ENCODE measurements at regions of chr1 and their contacts with region 1.

Region 1: GRCh38 chr1:174217787-174218574 is 58.7 kb downstream of the RABGAP1L start:
- DNase-seq: no peak
- ATAC-seq: peak; percentile 51
- H3K4me3 Mint-ChIP-seq: no peak overlapping the region
- H3K27ac Mint-ChIP-seq: no peak overlapping the region
- H3K4me1 Mint-ChIP-seq: peaks cover 12% of the 10 kb centered on the region
- H3K27me3 Mint-ChIP-seq: no peaks in the 10 kb centered on the region

Region 2: GRCh38 chr1:173420330-173420806 is 797.6 kb before region 1 on chr1:
- CTCF ChIA-PET with region 1: interaction called, 3 read pairs
- POLR2A ChIA-PET with region 1: no interaction called
- intact Hi-C with region 1: loop called in 1 of 2 experiments (anchors 1 kb)
- DNase-seq: peak; percentile 69
- ATAC-seq: peak; percentile 91
- H3K4me3 Mint-ChIP-seq: no peak overlapping the region
- H3K27ac Mint-ChIP-seq: no peak overlapping the region
- H3K4me1 Mint-ChIP-seq: peaks cover 3% of the 10 kb centered on the region
- H3K27me3 Mint-ChIP-seq: no peaks in the 10 kb centered on the region

Region 3: DNA sequence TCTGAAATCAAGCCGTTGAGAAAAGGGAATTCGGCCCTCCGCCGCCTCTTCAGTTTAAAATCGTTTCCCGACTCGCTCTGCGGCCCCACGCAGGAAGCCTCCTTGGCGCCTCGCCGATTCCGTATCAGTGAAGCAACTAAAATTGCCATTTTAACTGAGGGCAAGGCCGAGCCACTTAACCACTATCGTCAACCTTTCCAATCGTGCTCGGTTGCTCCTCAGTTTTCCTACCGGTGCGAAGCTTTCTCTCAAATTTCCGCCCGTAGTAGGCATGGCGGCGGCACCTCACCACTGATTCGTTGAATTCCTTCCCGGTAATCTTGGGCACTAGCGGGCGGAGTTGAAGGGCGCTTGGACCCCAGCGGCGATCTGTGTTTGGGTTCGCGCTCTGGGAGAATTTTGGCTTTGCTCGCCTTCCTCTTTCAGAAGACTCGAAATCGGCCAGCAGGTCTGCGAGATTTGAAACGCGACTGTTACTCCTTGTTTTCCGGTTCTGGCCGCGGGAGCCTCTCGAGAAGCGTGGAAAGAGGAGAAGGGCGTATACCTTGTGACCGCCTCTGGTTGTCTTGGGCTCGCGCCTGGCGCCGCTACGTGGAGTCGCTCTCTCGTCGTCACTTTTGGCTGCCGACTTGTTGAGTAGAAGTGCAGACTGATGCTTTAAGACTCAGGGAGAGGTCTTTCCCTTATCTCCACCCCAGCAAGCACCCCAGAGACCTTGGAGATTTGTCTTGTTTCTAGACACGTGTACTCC is 393.5 kb before region 1 on chr1 and contains the starts of genes CENPL and DARS2:
- CTCF ChIA-PET with region 1: no interaction called
- POLR2A ChIA-PET with region 1: no interaction called
- intact Hi-C with region 1: loop called in 1 of 2 experiments (anchors 2 kb)
- DNase-seq: peak; percentile 94
- ATAC-seq: peak; percentile 86
- H3K4me3 Mint-ChIP-seq: peak within 1 kb of the TSS; percentile 94
- H3K27ac Mint-ChIP-seq: peak within 1 kb of the TSS; percentile 99
- H3K4me1 Mint-ChIP-seq: peaks cover 55% of the 10 kb centered on the region
- H3K27me3 Mint-ChIP-seq: no peaks in the 10 kb centered on the region
- total RNA-seq, gene CENPL: 26.1 to 27.2 TPM
- total RNA-seq, gene DARS2: 57.2 to 62.0 TPM

Region 4: GRCh38 chr1:173986951-173987350 is 231.0 kb before region 1 on chr1:
- CTCF ChIA-PET with region 1: no interaction called
- POLR2A ChIA-PET with region 1: no interaction called
- intact Hi-C with region 1: loop called in 1 of 2 experiments (anchors 10 kb)
- DNase-seq: no peak
- ATAC-seq: no peak
- H3K4me3 Mint-ChIP-seq: no peak overlapping the region
- H3K27ac Mint-ChIP-seq: no peak overlapping the region
- H3K4me1 Mint-ChIP-seq: no peaks in the 10 kb centered on the region
- H3K27me3 Mint-ChIP-seq: no peaks in the 10 kb centered on the region

Region 5: GRCh38 chr1:174097426-174097825 is 120.6 kb before region 1 on chr1:
- CTCF ChIA-PET with region 1: interaction called, 4 read pairs
- POLR2A ChIA-PET with region 1: no interaction called
- intact Hi-C with region 1: loop called (anchors 2 to 10 kb)
- DNase-seq: no peak
- ATAC-seq: no peak
- H3K4me3 Mint-ChIP-seq: no peak overlapping the region
- H3K27ac Mint-ChIP-seq: no peak overlapping the region
- H3K4me1 Mint-ChIP-seq: no peaks in the 10 kb centered on the region
- H3K27me3 Mint-ChIP-seq: no peaks in the 10 kb centered on the region